CD8-positive, alpha-beta T cell (primary cell): ENCODE measurements at regions of chr14 and their contacts with region 1.

Region 1: GRCh38 chr14:103606963-103607668 is 21.9 kb upstream of the KLC1 start:
- DNase-seq: peak; percentile 12 to 83 (median 63)
- ATAC-seq: peak; percentile 82
- H3K4me3 ChIP-seq: peak overlapping the region; percentile 16 to 33
- H3K4me3 Mint-ChIP-seq: peak overlapping the region; percentile 74
- H3K27ac ChIP-seq: no peak overlapping the region
- H3K27ac Mint-ChIP-seq: no peak overlapping the region
- H3K4me1 ChIP-seq: peaks cover 19% of the 10 kb centered on the region
- H3K4me1 Mint-ChIP-seq: peaks cover 18% of the 10 kb centered on the region
- H3K27me3 ChIP-seq: no peaks in the 10 kb centered on the region
- H3K27me3 Mint-ChIP-seq: peaks cover 10% of the 10 kb centered on the region
- CTCF ChIP-seq: no peak

Region 2: DNA sequence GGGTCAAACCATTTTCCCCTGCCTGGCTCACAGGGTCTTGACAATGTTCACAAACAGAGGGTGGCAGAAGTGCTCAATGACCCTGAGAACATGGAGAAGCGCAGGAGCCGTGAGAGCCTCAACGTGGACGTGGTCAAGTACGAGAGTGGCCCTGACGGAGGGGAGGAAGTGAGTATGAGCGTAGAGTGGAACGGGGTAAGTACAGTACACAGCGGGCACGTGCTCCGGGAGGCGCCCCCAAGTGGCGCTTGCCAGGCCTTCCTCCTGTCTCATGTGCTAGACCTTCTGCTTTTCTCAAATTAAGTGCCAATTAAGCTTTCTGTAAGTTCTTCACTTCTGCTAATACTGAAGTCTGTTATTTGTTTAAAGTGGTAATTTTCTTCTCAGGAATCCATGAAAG is 72.2 kb after region 1 on chr14:
- CTCF ChIA-PET with region 1: interaction called, 14 read pairs
- POLR2A ChIA-PET with region 1: no interaction called
- intact Hi-C with region 1: loop called in 1 of 2 experiments (anchors 1 kb)
- DNase-seq: peak in 7 of 9 experiments; percentile 20 to 59 (median 49)
- ATAC-seq: peak; percentile 91
- H3K4me3 ChIP-seq: no peak overlapping the region
- H3K4me3 Mint-ChIP-seq: no peak overlapping the region
- H3K27ac ChIP-seq: peak overlapping the region in 1 of 2 experiments; percentile 4
- H3K27ac Mint-ChIP-seq: no peak overlapping the region
- H3K4me1 ChIP-seq: no peaks in the 10 kb centered on the region
- H3K4me1 Mint-ChIP-seq: peaks cover 5% of the 10 kb centered on the region
- H3K27me3 ChIP-seq: no peaks in the 10 kb centered on the region
- H3K27me3 Mint-ChIP-seq: no peaks in the 10 kb centered on the region
- CTCF ChIP-seq: peak; percentile 49

Region 3: GRCh38 chr14:103705118-103705503 is 98.0 kb after region 1 on chr14:
- CTCF ChIA-PET with region 1: no interaction called
- POLR2A ChIA-PET with region 1: no interaction called
- intact Hi-C with region 1: no loop called
- DNase-seq: no peak
- ATAC-seq: no peak
- H3K4me3 ChIP-seq: no peak overlapping the region
- H3K4me3 Mint-ChIP-seq: no peak overlapping the region
- H3K27ac ChIP-seq: no peak overlapping the region
- H3K27ac Mint-ChIP-seq: no peak overlapping the region
- H3K4me1 ChIP-seq: no peaks in the 10 kb centered on the region
- H3K4me1 Mint-ChIP-seq: no peaks in the 10 kb centered on the region
- H3K27me3 ChIP-seq: no peaks in the 10 kb centered on the region
- H3K27me3 Mint-ChIP-seq: no peaks in the 10 kb centered on the region
- CTCF ChIP-seq: no peak